ENCODE measurements at regions of chr11 and their contacts with region 1.

Region 1: GRCh38 chr11:14358729-14359439 is at the start of gene RRAS2:
- DNase-seq: peak; percentile 65
- ATAC-seq: peak; percentile 90
- H3K4me3 ChIP-seq: peak within 1 kb of the TSS; percentile 73
- H3K27ac ChIP-seq: peak within 1 kb of the TSS; percentile 80
- H3K4me1 ChIP-seq: peaks cover 2% of the 10 kb centered on the region; the same call in 1 of the 2 replicates
- H3K27me3 ChIP-seq: no peaks in the 10 kb centered on the region
- CTCF ChIP-seq: 0 out of 2 replicates have a peak, but pooled peaks have one; percentile 11
- POLR2A ChIP-seq: peak; percentile 87
- RAD21 ChIP-seq: no peak
- total RNA-seq, gene RRAS2: 106 and 155 TPM in 2 replicates

Region 2: DNA sequence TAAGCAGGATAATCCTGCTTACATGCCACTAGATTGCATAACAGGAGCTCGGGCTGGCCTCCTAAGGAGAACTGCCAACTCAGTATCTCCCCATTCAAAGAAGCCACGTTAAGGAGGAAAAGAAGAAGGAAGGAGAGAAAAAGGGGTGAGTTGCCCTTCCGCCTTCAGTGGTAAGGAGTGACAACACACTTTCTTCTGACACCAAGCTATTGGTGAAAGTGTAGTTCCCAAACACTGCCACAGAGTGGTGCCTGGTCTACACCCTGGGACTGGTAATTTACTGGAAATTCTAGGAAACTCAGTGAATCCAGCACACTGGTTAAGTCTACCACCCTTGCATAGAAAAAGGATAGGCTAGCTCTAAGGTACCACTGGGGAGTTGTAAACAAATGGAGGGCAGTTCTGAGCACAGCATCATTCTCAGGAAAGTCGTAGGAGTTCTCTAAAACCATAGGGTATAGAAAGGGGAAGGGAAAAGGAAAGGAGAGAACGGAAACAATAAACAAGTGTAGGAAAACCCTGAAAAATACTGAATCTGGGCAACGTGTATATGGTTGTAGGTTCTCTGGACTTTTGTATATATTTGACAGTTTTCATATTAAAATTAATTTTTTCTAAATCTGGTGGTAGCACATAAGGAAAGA is 58.1 kb before region 1 on chr11:
- CTCF ChIA-PET with region 1: interaction called, 3 read pairs
- POLR2A ChIA-PET with region 1: no interaction called
- dilution Hi-C with region 1: no loop called
- in situ Hi-C with region 1: no loop called
- intact Hi-C with region 1: loop called (anchors 2 kb)
- DNase-seq: peak; percentile 74
- ATAC-seq: peak; percentile 90
- H3K4me3 ChIP-seq: no peak overlapping the region
- H3K27ac ChIP-seq: 0 out of 2 replicates have a peak overlapping the region, but pooled peaks have one; percentile 4
- H3K4me1 ChIP-seq: peaks cover 5% of the 10 kb centered on the region
- H3K27me3 ChIP-seq: no peaks in the 10 kb centered on the region
- CTCF ChIP-seq: peak; percentile 87
- POLR2A ChIP-seq: 0 out of 2 replicates have a peak, but pooled peaks have one; percentile 25
- RAD21 ChIP-seq: peak; percentile 95

Region 3: GRCh38 chr11:14336507-14337503 is 22.1 kb before region 1 on chr11:
- CTCF ChIA-PET with region 1: no interaction called
- POLR2A ChIA-PET with region 1: no interaction called
- dilution Hi-C with region 1: no loop called
- in situ Hi-C with region 1: no loop called
- intact Hi-C with region 1: no loop called
- DNase-seq: peak; percentile 99
- ATAC-seq: peak; percentile 96
- H3K4me3 ChIP-seq: no peak overlapping the region
- H3K27ac ChIP-seq: no peak overlapping the region
- H3K4me1 ChIP-seq: peaks cover 4% of the 10 kb centered on the region; the same call in 1 of the 2 replicates
- H3K27me3 ChIP-seq: no peaks in the 10 kb centered on the region
- CTCF ChIP-seq: no peak
- POLR2A ChIP-seq: no peak
- RAD21 ChIP-seq: no peak

Region 4: DNA sequence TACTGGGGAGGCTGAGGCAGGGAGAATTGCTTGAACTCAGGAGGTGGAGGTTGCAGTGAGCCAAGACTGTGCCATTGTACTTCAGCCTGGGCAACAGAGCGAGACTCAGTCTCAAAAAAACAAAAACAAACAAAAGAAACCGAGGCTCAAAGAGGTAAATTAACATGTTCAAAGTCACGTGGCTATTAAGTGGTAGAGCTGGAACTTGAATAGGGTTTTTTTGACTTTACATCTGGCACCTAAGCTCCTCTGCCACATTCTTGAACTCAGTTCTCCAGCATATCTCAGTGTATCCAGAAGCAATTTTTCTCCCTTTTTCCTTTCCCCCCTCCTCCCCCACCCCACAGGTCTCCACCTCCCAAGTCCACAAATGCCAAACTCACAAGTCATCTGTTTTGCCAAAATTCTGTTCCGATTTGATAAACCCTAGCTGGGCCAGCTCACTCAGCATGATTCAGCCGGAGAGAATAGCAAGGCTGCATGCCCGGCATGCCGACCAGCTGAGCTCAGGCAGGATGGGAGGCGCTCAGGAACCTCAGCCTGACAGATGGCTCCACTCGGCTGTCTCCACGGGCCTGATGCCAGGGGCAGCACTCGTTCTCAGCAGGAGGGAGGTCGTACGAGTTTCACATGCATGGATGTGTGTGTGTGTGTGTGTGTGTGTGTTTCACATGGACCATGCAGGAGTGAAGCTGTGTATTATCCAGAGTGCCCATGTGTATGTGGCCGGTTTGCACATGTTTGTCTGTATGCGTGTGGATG is 63.3 kb after region 1 on chr11:
- CTCF ChIA-PET with region 1: no interaction called
- POLR2A ChIA-PET with region 1: interaction called, 3 read pairs
- dilution Hi-C with region 1: no loop called
- in situ Hi-C with region 1: no loop called
- intact Hi-C with region 1: loop called (anchors 2 kb)
- DNase-seq: peak; percentile 100
- ATAC-seq: peak; percentile 89
- H3K4me3 ChIP-seq: no peak overlapping the region
- H3K27ac ChIP-seq: peak overlapping the region; percentile 67
- H3K4me1 ChIP-seq: peaks cover 22% of the 10 kb centered on the region
- H3K27me3 ChIP-seq: no peaks in the 10 kb centered on the region
- CTCF ChIP-seq: no peak
- POLR2A ChIP-seq: no peak
- RAD21 ChIP-seq: 0 out of 2 replicates have a peak, but pooled peaks have one; percentile 17

Region 5: DNA sequence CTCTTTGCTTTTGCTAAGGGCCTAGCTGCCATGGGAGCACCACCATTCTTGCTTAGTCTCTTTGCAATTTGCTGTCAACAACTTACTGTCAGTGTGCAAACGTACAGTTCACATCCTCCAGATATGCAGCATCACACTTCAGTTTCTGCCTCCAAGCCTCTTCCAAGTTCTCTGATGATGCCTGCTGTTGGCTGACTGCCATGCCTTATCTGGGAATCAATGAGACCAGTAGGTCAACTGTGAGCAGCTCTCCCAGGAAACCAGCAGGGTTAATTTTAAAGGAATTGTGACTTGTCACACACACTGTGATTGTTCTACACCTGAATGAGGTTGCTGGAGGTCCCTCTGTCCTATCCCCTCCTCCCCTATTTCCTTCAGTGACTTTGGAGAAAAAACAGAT is 84.8 kb after region 1 on chr11:
- CTCF ChIA-PET with region 1: no interaction called
- POLR2A ChIA-PET with region 1: no interaction called
- dilution Hi-C with region 1: no loop called
- in situ Hi-C with region 1: loop called (anchors 5 kb)
- intact Hi-C with region 1: no loop called
- DNase-seq: peak; percentile 57
- ATAC-seq: no peak; the same call in 1 of the 2 replicates
- H3K4me3 ChIP-seq: no peak overlapping the region
- H3K27ac ChIP-seq: no peak overlapping the region
- H3K4me1 ChIP-seq: peaks cover 3% of the 10 kb centered on the region
- H3K27me3 ChIP-seq: no peaks in the 10 kb centered on the region
- CTCF ChIP-seq: no peak
- POLR2A ChIP-seq: no peak
- RAD21 ChIP-seq: no peak

Measured in IMR-90 (cell line).